ENCODE measurements at regions of chr22 and their contacts with region 1.

Region 1: GRCh38 chr22:33139937-33140336 is 81.8 kb upstream of the SYN3 start:
- H3K4me3 ChIP-seq: no peak overlapping the region
- H3K27ac ChIP-seq: no peak overlapping the region
- H3K4me1 ChIP-seq: no peaks in the 10 kb centered on the region
- CTCF ChIP-seq: no peak

Region 2: GRCh38 chr22:33110562-33111163 is 29.3 kb before region 1 on chr22:
- CTCF ChIA-PET with region 1: no interaction called
- POLR2A ChIA-PET with region 1: no interaction called
- H3K4me3 ChIP-seq: no peak overlapping the region
- H3K27ac ChIP-seq: no peak overlapping the region
- H3K4me1 ChIP-seq: peaks cover 4% of the 10 kb centered on the region
- CTCF ChIP-seq: no peak

Region 3: GRCh38 chr22:33126881-33127280 is 13.1 kb before region 1 on chr22:
- CTCF ChIA-PET with region 1: interaction called, 17 read pairs
- POLR2A ChIA-PET with region 1: no interaction called
- H3K4me3 ChIP-seq: no peak overlapping the region
- H3K27ac ChIP-seq: no peak overlapping the region
- H3K4me1 ChIP-seq: no peaks in the 10 kb centered on the region
- CTCF ChIP-seq: no peak

Measured in HEK293 (cell line).